Mammary epithelial cell (primary cell): ENCODE measurements at regions of chr1 and their contacts with region 1.

Region 1: DNA sequence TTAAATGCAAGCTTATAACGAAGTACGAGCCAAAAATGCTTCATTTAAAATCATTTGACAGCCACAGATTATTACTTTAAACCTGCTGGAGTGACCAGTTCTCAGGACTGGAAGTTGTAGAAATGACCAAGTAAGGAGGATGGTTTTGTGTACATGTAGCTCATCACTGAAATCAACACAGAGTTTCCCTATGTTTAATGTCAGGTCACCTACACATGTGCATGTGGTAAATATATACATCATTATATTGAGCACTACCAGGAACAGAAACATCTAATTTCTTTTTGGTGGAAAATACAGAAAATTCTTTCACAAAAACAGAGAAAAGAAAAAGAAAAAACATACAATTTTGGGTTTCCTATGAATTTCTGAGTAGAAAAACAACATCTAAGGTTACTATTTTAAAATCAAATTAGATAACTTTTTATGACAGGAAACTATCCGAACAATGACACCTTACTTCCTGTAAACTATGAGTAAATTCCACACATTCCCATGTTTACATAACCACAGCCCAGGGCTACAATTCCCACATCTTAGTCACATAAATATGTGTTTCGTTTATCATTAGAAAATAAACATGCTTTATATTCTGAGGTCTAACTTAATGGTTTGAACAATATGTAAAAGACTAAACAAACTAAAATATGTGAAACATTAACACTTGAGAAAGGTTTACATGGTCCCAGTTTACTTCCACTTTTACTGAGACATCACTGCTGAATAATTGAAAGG is 73.6 kb downstream of the ZNF281 start:
- DNase-seq: peak; percentile 50
- H3K4me3 ChIP-seq: no peak overlapping the region
- H3K27ac ChIP-seq: no peak overlapping the region
- H3K4me1 ChIP-seq: peaks cover 18% of the 10 kb centered on the region
- H3K27me3 ChIP-seq: no peaks in the 10 kb centered on the region
- CTCF ChIP-seq: no peak

Region 2: GRCh38 chr1:200372080-200372884 is 36.0 kb after region 1 on chr1:
- CTCF ChIA-PET with region 1: no interaction called
- dilution Hi-C with region 1: loop called (anchors 5 kb)
- in situ Hi-C with region 1: no loop called
- intact Hi-C with region 1: loop called (anchors 5 kb)
- DNase-seq: peak; percentile 73
- H3K4me3 ChIP-seq: no peak overlapping the region
- H3K27ac ChIP-seq: no peak overlapping the region
- H3K4me1 ChIP-seq: peaks cover 24% of the 10 kb centered on the region
- H3K27me3 ChIP-seq: no peaks in the 10 kb centered on the region
- CTCF ChIP-seq: no peak

Region 3: DNA sequence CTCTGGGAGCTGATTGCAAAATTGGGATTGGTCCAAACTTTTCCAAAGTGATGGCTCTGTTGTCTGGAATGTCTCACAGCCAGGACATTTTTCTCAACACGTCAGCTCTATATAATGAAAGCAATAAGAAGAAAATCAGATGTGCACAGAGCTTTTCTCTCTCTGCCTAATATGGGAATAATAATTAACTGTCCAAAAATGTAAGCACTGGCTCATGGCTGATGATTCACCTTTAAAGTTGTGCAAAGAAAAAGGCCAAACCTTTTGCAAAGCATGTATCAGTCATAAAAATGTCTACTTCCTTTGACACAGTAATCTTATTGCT is 43.1 kb after region 1 on chr1:
- CTCF ChIA-PET with region 1: no interaction called
- dilution Hi-C with region 1: loop called (anchors 5 kb)
- in situ Hi-C with region 1: no loop called
- intact Hi-C with region 1: loop called (anchors 5 kb)
- DNase-seq: peak; percentile 88
- H3K4me3 ChIP-seq: no peak overlapping the region
- H3K27ac ChIP-seq: peak overlapping the region; percentile 58
- H3K4me1 ChIP-seq: peaks cover 59% of the 10 kb centered on the region
- H3K27me3 ChIP-seq: no peaks in the 10 kb centered on the region
- CTCF ChIP-seq: no peak

Region 4: DNA sequence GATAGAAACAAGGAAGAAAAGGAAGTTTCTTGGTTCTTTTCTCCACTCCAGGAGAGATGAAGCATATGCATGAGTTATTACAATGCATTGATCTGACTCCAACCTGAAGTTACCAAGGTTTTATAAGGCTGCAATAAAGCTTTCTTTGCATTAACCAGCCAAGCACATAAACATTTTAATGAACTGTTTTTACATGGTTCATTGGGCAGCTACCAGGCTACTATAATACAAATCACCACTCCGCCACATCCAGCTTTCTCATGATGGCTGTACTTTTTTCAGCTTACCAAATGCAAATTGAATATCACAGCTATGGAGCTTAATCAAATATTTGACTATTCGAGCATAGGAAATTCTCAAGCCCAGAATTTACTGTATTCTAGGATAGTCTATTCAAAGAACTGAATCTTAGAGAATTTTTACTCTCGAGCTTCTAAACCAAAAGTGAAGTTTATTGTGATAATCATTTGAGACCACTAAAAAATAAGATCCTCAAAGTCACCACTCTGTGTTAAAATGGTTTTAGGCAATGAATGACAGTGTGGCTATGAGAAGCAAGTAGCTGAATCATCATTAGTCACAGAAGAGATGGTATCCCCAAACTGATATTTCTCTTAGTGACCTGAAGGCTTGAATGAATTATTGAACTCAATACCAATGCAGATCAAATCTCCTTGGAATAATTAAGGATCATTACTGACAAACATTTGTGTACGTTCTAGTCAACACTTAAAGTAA is 132.2 kb after region 1 on chr1:
- CTCF ChIA-PET with region 1: no interaction called
- dilution Hi-C with region 1: no loop called
- in situ Hi-C with region 1: no loop called
- intact Hi-C with region 1: no loop called
- DNase-seq: peak; percentile 14
- H3K4me3 ChIP-seq: no peak overlapping the region
- H3K27ac ChIP-seq: no peak overlapping the region
- H3K4me1 ChIP-seq: no peaks in the 10 kb centered on the region
- H3K27me3 ChIP-seq: no peaks in the 10 kb centered on the region
- CTCF ChIP-seq: no peak